Stomach (tissue), 19 donors: ENCODE measurements at regions of chr3 and their contacts with region 1.

Region 1: GRCh38 chr3:160343132-160343531 is 55.9 kb downstream of the IFT80 start:
- DNase-seq: peak in 1 of 2 donors; percentile 38
- H3K4me3 ChIP-seq: no peak overlapping the region
- H3K27ac ChIP-seq: no peak overlapping the region
- H3K4me1 ChIP-seq: no peaks in the 10 kb centered on the region
- H3K27me3 ChIP-seq: no peaks in the 10 kb centered on the region
- CTCF ChIP-seq: peak in 4 of 7 experiments; percentile 16 to 33 (median 22)
- EP300 ChIP-seq: no peak
- POLR2A ChIP-seq: no peak

Region 2: DNA sequence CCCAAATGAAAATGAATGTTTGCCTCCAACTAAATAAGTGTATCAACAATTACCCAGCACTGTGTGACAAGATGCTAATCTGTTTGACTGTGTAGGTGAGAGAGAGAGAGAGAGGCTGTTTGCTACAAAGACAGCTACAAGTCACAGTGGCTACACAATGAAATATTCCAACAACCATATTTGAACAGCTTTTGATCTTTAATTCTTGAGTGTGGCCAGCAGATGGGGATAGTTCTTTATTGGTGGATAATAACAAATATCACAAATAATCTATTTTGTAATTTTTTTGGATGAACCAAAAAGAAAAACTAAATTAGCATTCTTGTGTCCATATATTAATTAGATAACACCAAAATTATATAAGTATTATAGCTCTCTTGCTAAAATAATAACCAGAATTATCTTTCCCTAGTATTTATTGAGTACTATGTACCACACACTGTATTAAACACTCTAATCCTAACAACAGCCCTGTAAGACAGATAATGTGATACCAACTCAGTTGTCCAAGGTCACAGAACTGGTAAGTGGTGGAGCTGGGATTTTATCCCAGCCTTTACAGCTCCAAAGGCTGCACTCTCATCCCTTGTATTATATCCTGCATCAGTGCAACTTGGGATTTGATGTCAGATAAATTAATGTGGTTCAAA is 179.8 kb before region 1 on chr3:
- intact Hi-C with region 1: loop called (anchors 10 kb)
- DNase-seq: peak in 1 of 2 donors; percentile 60
- H3K4me3 ChIP-seq: no peak overlapping the region
- H3K27ac ChIP-seq: no peak overlapping the region
- H3K4me1 ChIP-seq: no peaks in the 10 kb centered on the region
- H3K27me3 ChIP-seq: no peaks in the 10 kb centered on the region
- CTCF ChIP-seq: peak in 4 of 7 experiments; percentile 31 to 52 (median 40)
- EP300 ChIP-seq: no peak
- POLR2A ChIP-seq: no peak